ENCODE measurements at regions of chr6 and their contacts with region 1.

Region 1: DNA sequence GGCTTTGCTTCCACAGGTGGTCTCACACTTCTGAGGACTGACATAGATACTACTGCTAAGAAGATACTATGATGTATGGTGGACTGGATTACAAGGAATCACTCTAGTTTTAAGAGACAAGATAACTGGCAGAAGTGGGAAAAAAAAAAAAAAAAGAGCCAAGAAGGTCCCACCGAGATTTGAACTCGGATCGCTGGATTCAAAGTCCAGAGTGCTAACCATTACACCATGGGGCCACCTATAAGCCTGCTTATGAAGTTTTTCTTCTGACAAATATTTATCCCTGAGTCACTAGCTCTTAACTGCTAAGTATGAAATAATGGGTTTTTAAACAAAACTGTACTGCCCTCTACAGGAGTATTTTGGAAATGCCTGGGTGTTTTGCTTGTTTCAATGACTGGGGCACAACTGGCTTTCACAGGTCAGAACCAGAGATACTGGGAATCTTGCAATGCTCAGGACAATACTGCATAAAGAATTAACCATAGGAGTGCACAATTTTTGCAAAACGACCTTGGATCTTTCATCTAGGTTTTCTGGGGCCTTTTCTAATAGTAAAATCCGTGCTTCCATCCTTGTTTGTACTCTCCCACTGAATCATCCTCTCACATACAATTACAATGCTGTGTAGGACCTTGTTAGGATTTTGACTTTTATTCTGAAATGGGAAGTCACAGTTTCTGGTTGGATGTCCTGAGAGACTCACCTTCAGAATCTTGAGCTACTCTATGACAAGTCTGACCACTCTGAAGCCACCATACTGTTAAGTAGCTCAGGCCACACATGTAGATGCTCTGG is 116.3 kb downstream of the OR2B2 start:
- DNase-seq: peak in 19 of 35 experiments; percentile 5 to 88 (median 41)
- ATAC-seq: peak; percentile 48 to 66 (median 57)
- H3K4me3 ChIP-seq: no peak overlapping the region
- H3K4me3 Mint-ChIP-seq: no peak overlapping the region
- H3K27ac ChIP-seq: no peak overlapping the region
- H3K27ac Mint-ChIP-seq: peak overlapping the region; percentile 17 to 22
- H3K4me1 ChIP-seq: peaks cover 11 to 20% of the 10 kb centered on the region in 2 experiments
- H3K4me1 Mint-ChIP-seq: peaks cover 23 to 26% (median 23%) of the 10 kb centered on the region in 3 donors
- H3K27me3 ChIP-seq: peaks cover 0 to 9% of the 10 kb centered on the region in 2 experiments
- H3K27me3 Mint-ChIP-seq: peaks cover 5 to 9% of the 10 kb centered on the region in 2 donors

Region 2: GRCh38 chr6:27126815-27127537 is 668.9 kb before region 1 on chr6:
- CTCF ChIA-PET with region 1: interaction called in 1 of 2 experiments, 15 read pairs
- POLR2A ChIA-PET with region 1: no interaction called
- DNase-seq: peak; percentile 54 to 94 (median 74)
- ATAC-seq: peak; percentile 70 to 87 (median 84)
- H3K4me3 ChIP-seq: peak overlapping the region; percentile 11 to 27
- H3K4me3 Mint-ChIP-seq: peak overlapping the region; percentile 68 to 76 (median 69)
- H3K27ac ChIP-seq: peak overlapping the region; percentile 57
- H3K27ac Mint-ChIP-seq: peak overlapping the region; percentile 82 to 86
- H3K4me1 ChIP-seq: peaks cover 10 to 17% of the 10 kb centered on the region in 2 experiments
- H3K4me1 Mint-ChIP-seq: peaks cover 10 to 20% (median 16%) of the 10 kb centered on the region in 3 donors
- H3K27me3 ChIP-seq: no peaks in the 10 kb centered on the region
- H3K27me3 Mint-ChIP-seq: no peaks in the 10 kb centered on the region

Region 3: GRCh38 chr6:27772261-27773001 is 23.5 kb before region 1 on chr6:
- CTCF ChIA-PET with region 1: interaction called, 17 to 64 read pairs
- POLR2A ChIA-PET with region 1: no interaction called
- DNase-seq: peak; percentile 74 to 90 (median 84)
- ATAC-seq: peak; percentile 98 to 99 (median 98)
- H3K4me3 ChIP-seq: no peak overlapping the region
- H3K4me3 Mint-ChIP-seq: peak overlapping the region in 2 of 3 donors; percentile 7 to 30
- H3K27ac ChIP-seq: no peak overlapping the region
- H3K27ac Mint-ChIP-seq: no peak overlapping the region
- H3K4me1 ChIP-seq: peaks cover 0 to 12% of the 10 kb centered on the region in 2 experiments
- H3K4me1 Mint-ChIP-seq: peaks cover 8% of the 10 kb centered on the region in 3 donors
- H3K27me3 ChIP-seq: peaks cover 0 to 5% of the 10 kb centered on the region in 2 experiments
- H3K27me3 Mint-ChIP-seq: peaks cover 11 to 20% of the 10 kb centered on the region in 2 donors

Region 4: GRCh38 chr6:27825025-27825793 is 29.3 kb after region 1 on chr6:
- CTCF ChIA-PET with region 1: interaction called, 3 to 8 read pairs
- POLR2A ChIA-PET with region 1: interaction called in 1 of 2 experiments, 16 read pairs
- DNase-seq: peak in 1 of 35 experiments; percentile 39
- ATAC-seq: no peak
- H3K4me3 ChIP-seq: peak overlapping the region; percentile 61 to 92
- H3K4me3 Mint-ChIP-seq: peak overlapping the region; percentile 80 to 90 (median 87)
- H3K27ac ChIP-seq: peak overlapping the region; percentile 89
- H3K27ac Mint-ChIP-seq: peak overlapping the region; percentile 89 to 96
- H3K4me1 ChIP-seq: peaks cover 6 to 12% of the 10 kb centered on the region in 2 experiments
- H3K4me1 Mint-ChIP-seq: peaks cover 36 to 39% (median 38%) of the 10 kb centered on the region in 3 donors
- H3K27me3 ChIP-seq: no peaks in the 10 kb centered on the region
- H3K27me3 Mint-ChIP-seq: no peaks in the 10 kb centered on the region

Region 5: DNA sequence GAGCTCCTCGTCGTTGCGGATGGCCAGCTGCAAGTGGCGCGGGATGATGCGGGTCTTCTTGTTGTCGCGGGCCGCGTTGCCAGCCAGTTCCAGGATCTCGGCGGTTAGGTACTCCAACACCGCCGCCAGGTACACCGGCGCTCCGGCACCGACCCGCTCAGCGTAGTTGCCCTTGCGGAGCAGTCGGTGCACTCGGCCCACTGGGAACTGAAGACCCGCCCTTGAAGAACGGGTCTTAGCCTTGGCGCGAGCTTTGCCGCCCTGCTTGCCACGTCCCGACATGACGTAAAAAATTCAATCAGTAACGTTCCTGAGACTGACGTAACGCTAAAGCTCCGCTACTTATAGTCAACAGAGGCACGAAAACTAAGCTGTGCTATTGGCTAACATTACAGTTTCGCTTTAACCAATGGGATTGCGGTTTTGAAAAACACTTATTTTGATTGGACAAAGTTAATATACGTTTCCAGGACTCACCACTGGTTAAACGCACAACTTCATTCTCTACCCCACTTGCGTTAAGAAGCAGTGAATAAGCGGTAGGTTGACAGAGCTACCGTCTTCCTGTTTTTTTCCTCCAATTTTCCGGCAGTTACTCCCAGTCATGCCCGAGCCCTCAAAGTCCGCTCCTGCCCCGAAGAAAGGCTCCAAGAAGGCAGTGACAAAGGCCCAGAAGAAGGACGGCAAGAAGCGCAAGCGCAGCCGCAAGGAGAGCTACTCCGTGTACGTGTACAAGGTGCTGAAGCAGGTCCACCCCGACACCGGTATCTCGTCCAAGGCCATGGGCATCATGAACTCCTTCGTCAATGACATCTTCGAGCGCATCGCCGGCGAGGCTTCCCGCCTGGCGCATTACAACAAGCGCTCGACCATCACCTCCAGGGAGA is 42.4 kb after region 1 on chr6:
- CTCF ChIA-PET with region 1: interaction called, 6 to 21 read pairs
- POLR2A ChIA-PET with region 1: interaction called in 1 of 2 experiments, 19 read pairs
- DNase-seq: peak; percentile 62 to 97 (median 79)
- ATAC-seq: peak; percentile 80 to 83 (median 82)
- H3K4me3 ChIP-seq: peak overlapping the region; percentile 86 to 87
- H3K4me3 Mint-ChIP-seq: no peak overlapping the region
- H3K27ac ChIP-seq: peak overlapping the region; percentile 99
- H3K27ac Mint-ChIP-seq: no peak overlapping the region
- H3K4me1 ChIP-seq: peaks cover 14 to 28% of the 10 kb centered on the region in 2 experiments
- H3K4me1 Mint-ChIP-seq: peaks cover 9 to 20% (median 9%) of the 10 kb centered on the region in 3 donors
- H3K27me3 ChIP-seq: peaks cover 0 to 8% of the 10 kb centered on the region in 2 experiments
- H3K27me3 Mint-ChIP-seq: peaks cover 4 to 7% of the 10 kb centered on the region in 2 donors

Region 6: DNA sequence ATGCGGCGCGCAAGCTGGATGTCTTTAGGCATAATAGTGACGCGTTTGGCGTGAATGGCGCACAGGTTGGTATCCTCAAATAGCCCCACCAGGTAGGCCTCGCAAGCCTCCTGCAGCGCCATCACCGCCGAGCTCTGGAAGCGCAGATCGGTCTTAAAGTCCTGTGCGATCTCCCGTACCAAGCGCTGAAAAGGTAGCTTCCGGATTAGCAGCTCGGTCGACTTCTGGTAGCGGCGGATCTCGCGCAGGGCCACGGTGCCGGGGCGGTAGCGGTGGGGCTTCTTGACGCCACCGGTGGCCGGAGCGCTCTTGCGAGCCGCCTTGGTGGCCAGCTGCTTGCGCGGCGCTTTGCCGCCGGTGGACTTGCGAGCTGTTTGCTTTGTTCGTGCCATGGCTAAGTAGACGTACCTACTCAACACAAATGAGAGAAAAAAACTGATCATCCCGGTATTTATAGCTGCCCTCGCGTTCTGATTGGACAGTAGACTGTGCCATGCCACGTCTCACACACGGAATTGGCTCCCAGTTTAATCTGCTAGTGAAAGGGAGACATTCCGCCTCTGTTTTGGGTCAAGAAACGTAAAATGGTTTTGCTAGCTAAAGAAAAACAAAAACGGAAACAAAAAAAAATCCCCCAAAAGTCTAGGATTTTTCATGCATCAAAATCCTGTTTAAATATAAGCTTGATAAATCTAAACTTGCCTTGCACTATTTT is 76.2 kb after region 1 on chr6:
- CTCF ChIA-PET with region 1: interaction called, 3 to 28 read pairs
- POLR2A ChIA-PET with region 1: interaction called, 3 to 9 read pairs
- DNase-seq: peak; percentile 70 to 96 (median 84)
- ATAC-seq: peak; percentile 79 to 82 (median 80)
- H3K4me3 ChIP-seq: peak overlapping the region; percentile 65 to 80
- H3K4me3 Mint-ChIP-seq: peak overlapping the region; percentile 83 to 87 (median 84)
- H3K27ac ChIP-seq: peak overlapping the region; percentile 92
- H3K27ac Mint-ChIP-seq: peak overlapping the region; percentile 93 to 96
- H3K4me1 ChIP-seq: peaks cover 16 to 34% of the 10 kb centered on the region in 2 experiments
- H3K4me1 Mint-ChIP-seq: peaks cover 38 to 47% (median 42%) of the 10 kb centered on the region in 3 donors
- H3K27me3 ChIP-seq: no peaks in the 10 kb centered on the region
- H3K27me3 Mint-ChIP-seq: no peaks in the 10 kb centered on the region